HAP-1 (cell line): ENCODE measurements at regions of chr10 and their contacts with region 1.

Region 1: DNA sequence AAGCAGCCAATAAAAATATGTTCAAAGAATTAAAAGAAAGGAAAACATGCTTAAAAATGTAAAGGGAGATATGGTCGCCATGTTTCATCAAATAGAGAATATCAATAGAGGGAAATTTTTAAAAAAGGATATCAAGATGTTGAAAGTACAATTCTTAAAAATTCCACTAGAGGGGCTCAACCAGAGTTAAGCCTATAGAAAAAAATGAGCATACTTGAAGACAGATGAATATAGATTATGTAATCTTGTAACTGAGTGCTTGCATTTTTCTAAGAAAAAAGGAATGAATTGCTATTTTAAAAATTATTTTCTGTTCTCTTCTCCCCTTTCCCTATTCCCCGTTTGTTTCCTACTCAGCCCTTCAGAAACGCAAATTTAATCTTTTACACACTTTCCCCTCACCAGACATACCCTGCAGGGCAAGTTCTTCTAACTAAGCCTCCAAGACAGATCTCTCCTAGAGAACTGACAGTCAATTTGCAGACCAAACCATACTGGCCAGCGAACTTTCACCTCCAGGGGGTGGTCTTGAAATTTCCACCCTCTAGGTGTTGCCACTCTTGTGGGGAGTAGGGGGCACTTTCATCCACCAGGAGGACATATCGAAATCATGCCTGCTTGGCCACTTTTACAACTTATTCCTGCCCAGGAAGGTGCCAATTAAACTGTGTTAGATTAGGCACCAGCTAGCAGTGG is 67.7 kb downstream of the NSUN6 start:
- DNase-seq: no peak
- H3K4me3 ChIP-seq: no peak overlapping the region
- H3K4me1 ChIP-seq: no peaks in the 10 kb centered on the region
- H3K27me3 ChIP-seq: no peaks in the 10 kb centered on the region

Region 2: GRCh38 chr10:18539335-18539734 is 44.4 kb before region 1 on chr10:
- in situ Hi-C with region 1: loop called (anchors 5 kb)
- DNase-seq: no peak
- H3K4me3 ChIP-seq: no peak overlapping the region
- H3K4me1 ChIP-seq: no peaks in the 10 kb centered on the region
- H3K27me3 ChIP-seq: no peaks in the 10 kb centered on the region

Region 3: DNA sequence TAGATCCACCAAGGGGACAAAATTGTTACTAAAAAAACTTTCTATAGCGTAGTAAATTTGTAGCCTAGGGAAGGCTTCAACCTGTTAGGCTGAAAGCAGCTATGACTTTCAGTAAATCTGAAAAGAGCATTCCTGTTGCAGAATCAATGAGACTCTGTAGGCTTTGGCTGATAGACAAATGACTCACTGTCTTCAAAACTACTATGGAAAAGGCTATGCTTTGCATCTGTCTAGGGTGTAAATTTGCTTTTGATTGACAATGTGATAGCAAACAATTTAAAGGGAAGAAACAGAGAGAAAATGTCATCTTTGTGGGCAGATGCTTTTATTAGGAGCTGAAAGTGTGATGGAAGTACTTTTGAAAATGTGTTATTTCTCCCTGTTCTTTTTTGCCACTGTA is 136.1 kb after region 1 on chr10:
- in situ Hi-C with region 1: no loop called
- DNase-seq: no peak
- H3K4me3 ChIP-seq: no peak overlapping the region
- H3K4me1 ChIP-seq: no peaks in the 10 kb centered on the region
- H3K27me3 ChIP-seq: no peaks in the 10 kb centered on the region